ENCODE measurements at regions of chr12 and their contacts with region 1.

Region 1: DNA sequence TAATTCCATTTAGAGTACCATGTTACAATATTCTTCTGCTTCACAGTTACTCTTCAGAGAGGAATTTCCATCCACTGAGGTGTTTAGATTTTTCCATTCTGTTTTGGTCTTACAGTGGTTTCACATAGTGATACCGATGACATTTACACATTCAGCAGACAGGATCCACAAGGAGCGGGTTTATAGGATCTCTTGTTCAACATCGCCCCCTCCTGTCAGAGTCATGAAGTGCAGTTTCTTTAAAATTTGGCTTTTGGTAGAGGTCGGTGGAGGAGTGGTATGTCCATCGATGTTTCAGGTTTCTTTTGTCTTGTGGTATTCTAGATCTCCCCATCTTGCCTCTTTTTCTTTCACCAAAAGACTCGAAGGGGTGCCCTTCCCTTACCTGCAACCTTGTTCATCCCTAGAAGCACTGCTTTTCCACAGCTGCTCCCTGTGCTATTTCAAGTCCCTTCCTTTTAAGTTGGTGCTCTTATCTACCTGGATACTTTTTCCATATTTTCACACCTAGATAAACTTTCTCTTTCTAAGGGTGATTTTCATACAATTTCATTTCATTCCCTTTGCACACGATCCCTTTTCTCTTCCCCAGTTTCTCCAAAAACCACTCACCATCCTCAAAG is 181.3 kb downstream of the ITPR2 start:
- DNase-seq: peak; percentile 64
- H3K4me3 ChIP-seq: no peak overlapping the region
- H3K27ac ChIP-seq: no peak overlapping the region
- H3K4me1 ChIP-seq: no peaks in the 10 kb centered on the region
- CTCF ChIP-seq: peak; percentile 96

Region 2: DNA sequence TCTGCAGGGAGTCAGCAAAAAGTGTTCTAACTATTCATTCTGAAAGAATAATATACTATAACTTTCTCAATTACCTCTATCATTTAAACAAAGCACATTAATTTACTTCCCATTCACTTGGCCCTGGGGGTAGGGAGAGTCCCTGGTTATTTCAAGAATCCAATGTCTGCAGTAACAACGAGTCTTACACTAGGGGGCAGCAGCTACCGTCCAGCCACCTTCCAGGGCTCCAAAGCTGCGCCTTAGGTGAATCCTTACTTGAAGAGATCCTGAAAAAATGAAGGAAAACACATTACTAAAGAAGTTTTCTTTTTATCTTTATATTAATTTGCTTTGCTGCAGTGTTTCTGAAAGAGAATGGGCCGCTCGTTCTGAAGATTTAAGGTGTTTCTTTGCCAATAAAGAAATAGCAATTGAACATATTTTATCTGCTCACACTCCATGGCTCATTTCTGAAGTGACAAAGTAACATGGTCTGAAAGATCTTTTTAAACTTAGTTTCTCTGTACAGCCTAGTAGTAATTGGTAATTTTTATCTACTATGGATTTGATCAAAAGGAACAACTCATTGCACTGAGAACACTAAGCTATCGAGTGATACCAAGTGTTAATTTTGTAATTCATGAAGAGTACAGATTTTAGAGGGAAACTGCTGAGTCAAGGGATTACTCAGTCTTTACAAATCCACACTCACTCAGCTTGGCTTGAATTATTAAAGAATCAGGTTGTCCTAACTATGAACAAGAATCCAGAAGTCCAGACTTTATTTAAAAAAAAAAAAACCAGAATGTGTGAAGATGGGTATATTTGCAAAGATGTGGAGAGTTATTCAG is 554.4 kb before region 1 on chr12:
- CTCF ChIA-PET with region 1: interaction called, 3 read pairs
- POLR2A ChIA-PET with region 1: interaction called, 4 read pairs
- intact Hi-C with region 1: loop called (anchors 2 kb)
- DNase-seq: peak; percentile 64
- H3K4me3 ChIP-seq: no peak overlapping the region
- H3K27ac ChIP-seq: no peak overlapping the region
- H3K4me1 ChIP-seq: no peaks in the 10 kb centered on the region
- CTCF ChIP-seq: peak; percentile 98

Measured in OCI-LY7 (cell line).